Prostate gland (tissue), 2 donors: ENCODE measurements at regions of chr18 and their contacts with region 1.

Region 1: GRCh38 chr18:44679056-44679905 is 1.4 kb upstream of the SETBP1 start:
- DNase-seq: peak; percentile 86
- H3K4me3 ChIP-seq: peak overlapping the region; percentile 78
- H3K27ac ChIP-seq: peak overlapping the region; percentile 98
- H3K4me1 ChIP-seq: no peaks in the 10 kb centered on the region
- H3K27me3 ChIP-seq: no peaks in the 10 kb centered on the region
- CTCF ChIP-seq: peak; percentile 65 to 88 (median 72)
- POLR2A ChIP-seq: peak; percentile 66

Region 2: GRCh38 chr18:43793910-43794309 is 885.4 kb before region 1 on chr18:
- intact Hi-C with region 1: loop called (anchors 10 kb)
- DNase-seq: no peak
- H3K4me3 ChIP-seq: no peak overlapping the region
- H3K27ac ChIP-seq: no peak overlapping the region
- H3K4me1 ChIP-seq: no peaks in the 10 kb centered on the region
- H3K27me3 ChIP-seq: no peaks in the 10 kb centered on the region
- CTCF ChIP-seq: no peak
- POLR2A ChIP-seq: no peak

Region 3: DNA sequence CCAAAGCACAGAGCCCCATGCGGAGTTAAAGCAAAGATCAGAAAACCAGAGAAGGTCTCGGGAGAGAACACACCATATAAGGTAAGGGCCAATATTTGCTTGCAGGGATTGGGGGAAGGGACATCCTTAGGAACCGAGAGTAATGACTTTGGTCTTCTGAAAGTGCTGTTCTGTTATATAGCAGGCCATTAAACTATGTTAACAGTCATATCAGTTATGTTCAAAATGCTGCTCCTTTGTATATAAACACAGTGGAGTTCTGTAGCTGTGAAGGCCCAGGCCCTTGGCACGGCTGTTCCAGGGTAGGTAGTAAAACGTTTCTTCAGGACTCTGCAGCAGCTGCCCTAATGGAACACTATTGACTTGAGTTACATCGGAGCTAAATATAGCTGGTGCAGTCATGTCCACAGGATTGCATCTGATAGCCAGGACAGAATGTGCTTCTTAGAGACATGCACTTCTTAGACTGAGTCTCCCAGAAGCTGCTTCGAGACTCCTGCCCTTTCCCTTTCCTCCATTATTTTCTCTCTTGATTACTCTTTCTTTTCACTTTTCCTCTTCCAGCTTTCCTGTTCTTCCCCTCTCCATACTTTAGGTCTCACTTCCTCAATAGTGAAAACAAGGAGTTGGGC is 123.9 kb after region 1 on chr18:
- intact Hi-C with region 1: loop called (anchors 5 kb)
- DNase-seq: peak; percentile 69
- H3K4me3 ChIP-seq: no peak overlapping the region
- H3K27ac ChIP-seq: peak overlapping the region; percentile 70 to 78
- H3K4me1 ChIP-seq: no peaks in the 10 kb centered on the region
- H3K27me3 ChIP-seq: no peaks in the 10 kb centered on the region
- CTCF ChIP-seq: no peak
- POLR2A ChIP-seq: no peak

Region 4: DNA sequence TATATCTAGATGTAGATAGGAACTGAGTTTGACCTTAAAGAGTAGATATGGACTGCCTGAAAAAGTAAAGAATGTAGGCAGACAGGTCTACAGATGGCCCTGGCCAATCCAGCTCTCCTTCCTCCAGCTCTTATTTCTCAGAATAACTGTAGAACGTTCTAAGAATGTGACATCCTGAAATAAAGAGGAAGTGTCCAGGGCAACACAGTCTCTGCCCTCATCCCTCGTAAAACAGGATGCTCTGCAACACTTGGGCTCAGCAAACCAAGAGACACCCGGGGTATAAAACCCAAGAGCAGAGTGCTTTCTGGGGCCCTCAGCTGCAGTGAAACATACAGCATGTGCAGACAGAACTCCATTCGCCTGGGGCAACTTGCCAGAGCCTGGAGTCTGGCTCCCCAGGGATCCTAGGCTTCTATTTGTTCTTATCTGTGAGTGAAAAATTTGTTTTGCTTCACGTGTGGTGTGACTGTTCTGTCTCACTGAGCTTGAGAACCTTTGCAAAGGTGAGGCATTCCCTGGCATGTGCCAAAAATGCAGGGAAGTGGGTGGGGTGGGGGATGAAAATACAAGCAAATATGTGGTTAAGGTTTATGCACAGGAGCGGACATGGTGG is 402.4 kb after region 1 on chr18:
- intact Hi-C with region 1: loop called (anchors 2 kb)
- DNase-seq: no peak
- H3K4me3 ChIP-seq: no peak overlapping the region
- H3K27ac ChIP-seq: no peak overlapping the region
- H3K4me1 ChIP-seq: no peaks in the 10 kb centered on the region
- H3K27me3 ChIP-seq: no peaks in the 10 kb centered on the region
- CTCF ChIP-seq: no peak
- POLR2A ChIP-seq: no peak

Region 5: GRCh38 chr18:45324495-45325113 is 645.3 kb after region 1 on chr18:
- intact Hi-C with region 1: loop called (anchors 5 kb)
- DNase-seq: peak; percentile 62
- H3K4me3 ChIP-seq: no peak overlapping the region
- H3K27ac ChIP-seq: peak overlapping the region in 1 of 2 donors; percentile 10
- H3K4me1 ChIP-seq: no peaks in the 10 kb centered on the region
- H3K27me3 ChIP-seq: no peaks in the 10 kb centered on the region
- CTCF ChIP-seq: no peak
- POLR2A ChIP-seq: no peak

Region 6: GRCh38 chr18:45526114-45526841 is 847.0 kb after region 1 on chr18:
- intact Hi-C with region 1: loop called (anchors 5 kb)
- DNase-seq: no peak
- H3K4me3 ChIP-seq: no peak overlapping the region
- H3K27ac ChIP-seq: peak overlapping the region in 1 of 2 donors; percentile 11
- H3K4me1 ChIP-seq: no peaks in the 10 kb centered on the region
- H3K27me3 ChIP-seq: no peaks in the 10 kb centered on the region
- CTCF ChIP-seq: peak in 1 of 4 experiments; percentile 20
- POLR2A ChIP-seq: no peak